MCF 10A (cell line): ENCODE measurements at regions of chr5 and their contacts with region 1.

Region 1: DNA sequence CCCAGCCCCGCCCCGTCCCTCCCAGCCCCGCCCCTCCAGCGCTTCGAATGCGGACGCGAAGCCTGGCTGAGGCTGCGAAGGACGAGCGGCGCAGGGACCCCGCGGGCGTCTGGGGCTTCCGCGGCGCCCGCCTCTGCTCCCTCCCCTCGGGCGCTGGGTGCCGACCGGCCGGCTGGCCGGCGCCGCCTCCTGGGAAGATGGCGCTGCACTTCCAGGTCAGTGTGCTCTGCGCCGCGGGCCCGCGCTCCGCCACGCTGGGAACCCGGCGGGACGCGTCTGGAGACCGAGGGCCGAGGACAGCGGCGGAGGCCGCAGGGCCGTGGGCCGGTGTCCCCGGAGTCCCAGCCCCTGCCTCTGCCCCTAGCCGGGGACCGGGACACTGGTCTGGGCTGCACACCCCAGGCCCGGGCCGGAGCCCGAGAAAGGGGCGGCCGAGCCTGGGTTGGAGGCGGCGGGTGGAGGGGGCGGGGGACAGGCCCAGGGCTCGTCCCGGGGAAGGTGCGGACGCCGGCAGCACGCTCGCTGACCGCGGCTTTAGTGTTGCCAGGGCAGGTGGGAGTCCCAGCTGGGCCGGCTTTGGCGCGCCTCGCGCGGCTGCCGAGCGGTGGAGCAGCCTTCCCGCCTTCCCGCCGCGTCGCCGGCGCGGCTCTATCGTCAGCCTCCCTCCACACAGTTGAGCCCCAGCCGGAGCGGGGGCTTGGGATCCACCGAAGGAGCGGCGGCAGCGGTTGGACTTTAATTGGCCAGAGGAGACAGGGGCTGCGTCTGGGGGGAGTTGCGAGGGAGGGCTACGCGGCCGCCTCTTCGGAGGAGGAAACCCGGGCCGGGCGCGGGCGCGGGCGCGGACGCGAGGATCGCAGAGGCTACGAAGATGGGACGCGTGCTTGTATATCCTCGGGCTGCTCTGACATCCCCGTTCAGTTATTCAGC is at the start of gene RANBP17:
- DNase-seq: peak; percentile 79
- H3K4me3 Mint-ChIP-seq: peak within 1 kb of the TSS; percentile 68
- H3K27ac Mint-ChIP-seq: peak within 1 kb of the TSS; percentile 74
- H3K4me1 Mint-ChIP-seq: peaks cover 24% of the 10 kb centered on the region
- H3K27me3 Mint-ChIP-seq: no peaks in the 10 kb centered on the region
- CTCF ChIP-seq: peak; percentile 6
- total RNA-seq, gene RANBP17: 19.0 and 25.8 TPM in 2 replicates

Region 2: DNA sequence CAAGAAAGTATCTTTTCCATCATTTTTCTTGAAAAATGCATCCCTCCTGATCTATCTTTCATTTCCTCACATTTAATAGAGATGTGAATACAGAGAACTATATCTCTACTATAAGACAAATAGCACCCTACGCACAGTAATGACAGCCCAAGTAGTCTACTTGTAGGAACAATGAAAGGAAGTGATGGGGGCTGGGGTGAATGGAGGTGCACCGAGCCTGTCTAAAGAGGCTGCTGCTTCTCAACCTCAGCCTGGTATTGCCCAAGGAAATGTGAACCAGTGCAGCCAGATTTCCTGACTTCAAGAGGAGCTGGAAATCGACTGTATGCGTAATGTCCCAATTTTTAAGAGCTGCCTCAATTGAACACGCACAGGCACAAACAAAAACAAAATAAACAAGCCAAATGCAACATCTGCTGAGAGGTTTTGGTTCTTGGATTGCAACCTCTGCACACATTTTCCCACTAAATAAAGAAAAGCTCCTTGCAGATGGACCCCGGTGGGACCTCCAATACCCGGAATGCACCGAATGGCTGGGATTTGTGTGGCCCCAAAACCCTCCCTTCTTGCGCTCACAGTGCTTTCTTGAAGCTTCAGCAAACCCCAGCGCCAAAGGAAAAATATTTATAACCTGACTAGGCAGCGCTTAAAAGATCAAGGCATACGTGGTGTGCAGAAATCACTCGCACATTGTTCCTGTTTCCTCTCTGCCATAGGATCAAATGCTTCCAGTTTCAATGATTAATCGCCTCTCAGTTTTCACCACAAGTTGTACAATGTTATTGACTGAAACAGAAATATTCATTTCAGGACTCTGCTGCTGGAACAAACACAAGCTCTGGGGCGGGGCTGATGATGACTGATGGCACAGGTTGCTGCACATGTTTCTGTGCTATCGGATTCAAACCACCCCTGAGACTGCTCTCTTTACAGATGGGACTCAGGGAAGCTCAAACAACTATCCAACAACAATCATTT is 289.9 kb before region 1 on chr5:
- CTCF ChIA-PET with region 1: no interaction called
- POLR2A ChIA-PET with region 1: no interaction called
- intact Hi-C with region 1: no loop called
- DNase-seq: no peak
- H3K4me3 Mint-ChIP-seq: no peak overlapping the region
- H3K27ac Mint-ChIP-seq: no peak overlapping the region
- H3K4me1 Mint-ChIP-seq: peaks cover 5% of the 10 kb centered on the region
- H3K27me3 Mint-ChIP-seq: peaks cover 63% of the 10 kb centered on the region
- CTCF ChIP-seq: no peak

Region 3: DNA sequence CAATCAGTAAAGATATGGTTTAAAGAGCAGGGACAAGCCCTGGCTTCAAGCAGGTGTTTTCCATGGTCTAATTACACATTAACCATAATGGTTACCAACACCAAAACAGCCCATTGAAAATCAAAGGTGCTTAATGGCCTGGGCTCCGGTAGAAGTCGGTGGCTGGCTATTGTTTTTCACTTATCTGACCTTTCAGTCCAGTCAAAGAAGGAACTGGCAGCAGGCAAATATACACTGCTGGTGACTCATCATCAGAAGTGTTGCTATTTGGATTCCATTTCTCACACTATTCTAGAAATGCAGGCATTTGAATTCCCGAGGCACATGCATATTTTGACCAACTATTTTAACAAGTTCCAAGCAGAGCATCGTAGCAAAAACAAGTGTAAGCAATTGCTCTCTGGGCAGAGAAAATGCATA is 104.9 kb before region 1 on chr5:
- CTCF ChIA-PET with region 1: no interaction called
- POLR2A ChIA-PET with region 1: no interaction called
- intact Hi-C with region 1: loop called (anchors 5 kb)
- DNase-seq: peak; percentile 77
- H3K4me3 Mint-ChIP-seq: no peak overlapping the region
- H3K27ac Mint-ChIP-seq: peak overlapping the region; percentile 84
- H3K4me1 Mint-ChIP-seq: peaks cover 45% of the 10 kb centered on the region
- H3K27me3 Mint-ChIP-seq: no peaks in the 10 kb centered on the region
- CTCF ChIP-seq: no peak

Region 4: DNA sequence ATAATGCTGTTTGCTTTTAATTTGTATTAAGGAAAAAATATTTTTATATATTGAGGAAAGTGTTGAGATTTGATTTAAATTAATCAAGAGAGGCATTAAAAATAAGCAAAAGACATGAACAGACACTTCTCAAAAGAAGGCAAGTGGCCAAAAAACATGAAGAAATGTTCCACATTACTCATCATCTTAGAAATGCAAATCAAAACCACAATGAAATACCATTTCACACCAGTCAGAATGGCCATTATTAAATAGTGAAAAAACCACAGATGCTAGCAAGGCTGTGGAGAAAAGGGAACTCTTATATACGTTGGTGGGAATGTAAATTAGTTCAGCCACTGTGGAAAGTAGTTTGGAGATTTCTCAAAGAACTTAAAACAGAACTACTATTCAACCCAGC is 45.7 kb after region 1 on chr5:
- CTCF ChIA-PET with region 1: interaction called, 3 read pairs
- POLR2A ChIA-PET with region 1: no interaction called
- intact Hi-C with region 1: loop called (anchors 5 kb)
- DNase-seq: peak; percentile 87
- H3K4me3 Mint-ChIP-seq: no peak overlapping the region
- H3K27ac Mint-ChIP-seq: peak overlapping the region; percentile 46
- H3K4me1 Mint-ChIP-seq: peaks cover 7% of the 10 kb centered on the region
- H3K27me3 Mint-ChIP-seq: no peaks in the 10 kb centered on the region
- CTCF ChIP-seq: no peak